ENCODE measurements at regions of chr4 and their contacts with region 1.

Region 1: DNA sequence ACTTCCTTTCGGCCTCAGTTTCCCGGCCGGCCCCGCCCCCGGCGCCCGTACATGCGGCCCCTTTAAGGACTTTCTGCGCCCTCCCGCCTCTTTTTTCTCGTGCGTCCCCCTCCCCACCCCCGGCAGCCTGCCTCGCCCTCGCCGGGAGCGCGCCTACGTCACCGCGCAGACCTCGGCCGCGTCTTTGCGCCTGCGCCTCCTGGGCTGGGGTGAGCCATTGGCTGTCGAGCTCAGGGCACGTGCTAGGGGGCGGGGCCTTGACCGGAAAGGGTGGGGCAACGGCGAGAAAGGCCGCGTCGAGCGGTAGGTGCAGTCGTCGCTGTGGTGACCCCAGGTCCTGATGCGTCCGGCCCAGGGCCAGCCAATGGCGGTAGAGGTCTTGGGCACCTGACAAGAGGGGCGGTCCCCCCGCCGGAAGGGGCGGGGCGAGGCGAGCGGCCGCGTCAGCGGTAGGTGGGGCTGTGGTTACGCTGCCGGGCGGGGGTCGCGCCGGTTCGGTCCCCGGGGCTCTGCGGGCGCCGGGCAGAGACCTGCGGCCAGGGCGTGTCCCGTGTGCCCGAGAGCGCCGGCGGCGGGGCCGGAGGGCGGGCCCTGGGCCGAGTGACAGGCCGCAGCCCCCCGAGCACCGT is at the start of gene UVSSA:
- DNase-seq: peak; percentile 100
- CTCF ChIP-seq: no peak

Region 2: DNA sequence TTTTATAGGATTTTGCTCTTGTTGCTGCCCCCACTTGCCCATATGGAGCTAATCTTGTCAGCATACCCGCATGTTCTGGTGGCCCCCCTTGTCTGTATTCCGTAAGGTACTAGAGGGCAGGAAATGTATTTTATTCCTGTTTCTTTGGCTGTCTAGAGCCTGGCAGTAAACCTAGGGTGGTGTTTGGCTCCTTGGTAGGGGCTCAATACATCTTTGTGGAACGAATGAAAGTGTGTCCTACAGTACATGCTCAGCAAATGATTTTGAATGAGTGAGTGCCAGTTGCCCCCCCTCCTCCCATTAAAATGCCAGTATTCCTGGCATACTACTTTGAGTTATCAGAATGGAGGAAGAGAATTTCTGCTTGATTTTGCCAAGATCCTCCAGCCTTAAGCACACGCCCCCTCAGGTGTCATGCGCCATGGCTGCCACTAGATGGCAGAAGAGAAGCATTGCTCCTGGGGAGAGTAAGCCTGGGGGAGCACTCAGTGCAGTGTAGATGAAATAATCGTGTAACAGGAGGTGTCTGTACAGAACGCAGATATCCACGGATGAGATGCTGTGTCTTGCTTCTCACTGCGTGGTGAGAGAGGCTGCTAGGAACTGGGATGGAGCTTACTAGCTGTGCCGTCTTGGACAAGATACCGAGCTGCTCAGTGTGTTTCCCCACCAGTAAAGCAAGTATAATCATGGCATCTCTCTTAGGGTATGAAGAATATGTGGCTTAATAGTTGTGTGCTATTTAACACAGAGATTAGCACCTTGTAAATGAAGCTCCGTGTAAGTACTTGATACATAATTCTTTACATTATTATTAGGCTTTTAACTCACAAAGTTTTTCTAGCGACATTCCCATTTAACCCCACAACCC is 216.3 kb before region 1 on chr4:
- CTCF ChIA-PET with region 1: interaction called, 25 read pairs
- POLR2A ChIA-PET with region 1: no interaction called
- DNase-seq: peak; percentile 76
- CTCF ChIP-seq: peak; percentile 99

Region 3: DNA sequence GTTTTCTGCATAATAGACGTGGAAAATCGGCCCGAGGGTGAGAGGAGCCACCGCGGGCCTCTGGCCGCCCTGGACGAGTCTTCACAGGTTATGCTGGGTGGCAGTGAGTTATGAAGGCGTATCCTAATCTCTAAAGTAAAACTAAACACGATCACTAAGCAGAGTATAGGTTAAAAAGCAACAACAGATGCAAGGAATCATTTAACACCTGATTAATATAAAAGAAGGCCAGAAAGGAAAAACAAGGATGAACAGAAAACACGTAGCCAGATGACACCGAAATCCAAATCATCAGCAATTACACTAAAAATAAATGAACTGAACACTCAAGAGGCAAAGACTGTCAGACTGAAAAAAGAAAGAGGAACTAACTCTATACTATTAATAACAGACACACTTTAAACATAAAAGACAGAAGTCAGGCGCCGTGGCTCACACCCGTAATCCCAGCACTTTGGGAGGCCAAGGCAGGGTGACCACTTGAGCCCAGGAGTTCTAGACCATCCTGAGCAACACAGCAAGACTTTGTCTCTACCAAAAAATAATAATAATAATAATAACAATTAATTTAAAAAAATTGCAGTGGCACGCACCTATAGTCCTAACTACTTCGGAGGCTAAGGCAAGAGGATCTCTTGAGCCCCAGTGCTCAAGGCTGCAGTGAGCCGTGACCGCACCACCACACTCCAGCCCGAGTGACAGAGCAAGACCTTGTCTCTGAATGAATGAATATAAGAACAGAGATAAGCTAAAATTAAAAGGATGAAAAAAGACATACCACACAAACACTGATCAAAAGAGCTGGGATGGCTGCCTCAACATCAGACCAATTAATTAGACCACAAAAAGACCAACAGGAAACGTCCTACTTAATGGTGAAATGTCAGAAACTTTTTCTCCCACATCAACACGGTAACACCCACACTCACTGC is 128.0 kb before region 1 on chr4:
- CTCF ChIA-PET with region 1: no interaction called
- POLR2A ChIA-PET with region 1: no interaction called
- DNase-seq: peak; percentile 75
- CTCF ChIP-seq: no peak